HEK293T (cell line): ENCODE measurements at regions of chr2 and their contacts with region 1.

Region 1: GRCh38 chr2:9630749-9631483 is at the start of gene YWHAQ:
- DNase-seq: peak; percentile 97

Region 2: GRCh38 chr2:9618410-9618809 is 12.5 kb before region 1 on chr2:
- CTCF ChIA-PET with region 1: no interaction called
- POLR2A ChIA-PET with region 1: interaction called, 24 read pairs
- DNase-seq: no peak

Region 3: DNA sequence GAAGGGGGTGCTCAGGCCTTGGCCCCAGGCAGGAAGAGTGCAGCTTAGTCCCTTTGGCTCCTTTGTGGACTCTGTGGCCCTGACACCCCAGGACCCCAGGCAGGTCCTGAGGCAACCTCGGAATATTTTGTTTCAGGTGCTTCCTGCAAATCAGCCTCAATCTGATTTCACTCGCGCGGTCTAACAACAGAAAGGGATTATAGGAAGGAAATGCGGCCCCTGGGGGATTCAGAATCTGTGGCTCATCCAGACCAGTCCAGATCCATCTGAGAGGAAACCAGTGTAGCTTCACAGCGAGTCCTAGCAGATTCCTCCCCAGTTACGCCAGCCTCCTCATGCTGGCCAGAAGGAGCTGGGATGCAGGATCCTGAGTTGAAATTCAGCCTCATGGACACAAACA is 59.3 kb after region 1 on chr2:
- CTCF ChIA-PET with region 1: interaction called, 10 read pairs
- POLR2A ChIA-PET with region 1: interaction called, 4 read pairs
- DNase-seq: no peak

Region 4: GRCh38 chr2:10122386-10123280 is 491.7 kb after region 1 on chr2 and contains the start of gene RRM2:
- CTCF ChIA-PET with region 1: no interaction called
- POLR2A ChIA-PET with region 1: no interaction called
- DNase-seq: peak; percentile 89